ENCODE measurements at regions of chr4 and their contacts with region 1.

Region 1: DNA sequence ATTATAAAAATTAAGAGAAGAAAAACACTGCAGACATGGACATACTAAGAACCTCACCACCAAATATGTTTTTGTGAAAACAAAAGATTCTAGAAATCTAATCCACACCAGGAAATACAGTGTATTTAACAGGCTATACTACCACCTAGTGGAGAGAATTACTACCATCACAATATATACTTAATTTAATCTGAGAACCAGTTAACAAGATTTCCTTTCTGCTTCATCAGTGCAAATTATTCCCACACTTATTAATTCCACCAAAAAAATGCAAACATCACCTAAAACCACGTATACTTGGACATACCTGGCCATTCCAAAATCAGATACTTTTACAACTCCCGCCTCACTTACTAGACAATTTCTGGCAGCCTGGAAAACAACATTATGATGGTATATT is 7.0 kb upstream of the TXK start:
- DNase-seq: peak; percentile 20
- ATAC-seq: peak; percentile 60
- H3K4me3 ChIP-seq: no peak overlapping the region
- H3K27ac ChIP-seq: no peak overlapping the region
- H3K4me1 ChIP-seq: no peaks in the 10 kb centered on the region
- H3K27me3 ChIP-seq: no peaks in the 10 kb centered on the region
- CTCF ChIP-seq: peak; percentile 44
- EP300 ChIP-seq: no peak
- POLR2A ChIP-seq: no peak
- RAD21 ChIP-seq: no peak

Region 2: GRCh38 chr4:48269861-48270522 is 128.9 kb after region 1 on chr4:
- CTCF ChIA-PET with region 1: no interaction called
- POLR2A ChIA-PET with region 1: no interaction called
- in situ Hi-C with region 1: loop called (anchors 10 kb)
- intact Hi-C with region 1: no loop called
- DNase-seq: peak; percentile 75
- ATAC-seq: peak; percentile 96
- H3K4me3 ChIP-seq: peak overlapping the region; percentile 55 to 82 (median 72)
- H3K27ac ChIP-seq: no peak overlapping the region
- H3K4me1 ChIP-seq: 0 out of 2 replicates have a peak, but pooled peaks cover 13% of the 10 kb centered on the region
- H3K27me3 ChIP-seq: peaks cover 0 to 4% of the 10 kb centered on the region in 2 experiments; a peak in 1 of 5 replicates
- CTCF ChIP-seq: peak; percentile 46
- EP300 ChIP-seq: no peak
- POLR2A ChIP-seq: peak in 1 of 2 experiments; percentile 45; a peak in 1 of 4 replicates
- RAD21 ChIP-seq: no peak